GM12878 (cell line): ENCODE measurements at regions of chr3 and their contacts with region 1.

Region 1: GRCh38 chr3:196251918-196252317 is 35.6 kb downstream of the SLC51A start:
- DNase-seq: no peak
- ATAC-seq: no peak
- H3K4me3 ChIP-seq: no peak overlapping the region
- H3K27ac ChIP-seq: no peak overlapping the region
- H3K4me1 ChIP-seq: no peaks in the 10 kb centered on the region
- H3K27me3 ChIP-seq: no peaks in the 10 kb centered on the region
- CTCF ChIP-seq: no peak
- EP300 ChIP-seq: no peak
- POLR2A ChIP-seq: no peak
- RAD21 ChIP-seq: no peak

Region 2: GRCh38 chr3:196280689-196281440 is 28.9 kb after region 1 on chr3:
- CTCF ChIA-PET with region 1: interaction called, 13 read pairs
- POLR2A ChIA-PET with region 1: interaction called, 3 read pairs
- RAD21 ChIA-PET with region 1: no interaction called
- SMC1A ChIA-PET with region 1: interaction called, 4 read pairs
- in situ Hi-C with region 1: no loop called
- intact Hi-C with region 1: no loop called
- DNase-seq: no peak
- ATAC-seq: peak; percentile 89
- H3K4me3 ChIP-seq: peak overlapping the region; percentile 55
- H3K27ac ChIP-seq: peak overlapping the region; percentile 71
- H3K4me1 ChIP-seq: peaks cover 29% of the 10 kb centered on the region
- H3K27me3 ChIP-seq: no peaks in the 10 kb centered on the region
- CTCF ChIP-seq: no peak
- EP300 ChIP-seq: no peak
- POLR2A ChIP-seq: no peak
- RAD21 ChIP-seq: no peak

Region 3: GRCh38 chr3:196317687-196318467 is 66.0 kb after region 1 on chr3 and contains the start of gene DYNLT2B:
- CTCF ChIA-PET with region 1: interaction called, 11 read pairs
- POLR2A ChIA-PET with region 1: no interaction called
- RAD21 ChIA-PET with region 1: no interaction called
- SMC1A ChIA-PET with region 1: interaction called, 3 read pairs
- in situ Hi-C with region 1: no loop called
- intact Hi-C with region 1: no loop called
- DNase-seq: peak; percentile 67
- ATAC-seq: peak; percentile 97
- H3K4me3 ChIP-seq: peak within 1 kb of the TSS; percentile 97
- H3K27ac ChIP-seq: peak within 1 kb of the TSS; percentile 83
- H3K4me1 ChIP-seq: no peaks in the 10 kb centered on the region
- H3K27me3 ChIP-seq: no peaks in the 10 kb centered on the region
- CTCF ChIP-seq: peak in 1 of 3 experiments; percentile 45; a peak in 2 of 6 replicates
- EP300 ChIP-seq: no peak
- POLR2A ChIP-seq: peak; percentile 88
- RAD21 ChIP-seq: no peak
- polyA plus RNA-seq, gene DYNLT2B: 24.2 to 39.6 TPM

Region 4: GRCh38 chr3:196360586-196360985 is 108.7 kb after region 1 on chr3:
- CTCF ChIA-PET with region 1: interaction called, 4 read pairs
- POLR2A ChIA-PET with region 1: no interaction called
- RAD21 ChIA-PET with region 1: no interaction called
- SMC1A ChIA-PET with region 1: interaction called, 3 read pairs
- in situ Hi-C with region 1: no loop called
- intact Hi-C with region 1: loop called (anchors 10 kb)
- DNase-seq: no peak
- ATAC-seq: no peak
- H3K4me3 ChIP-seq: no peak overlapping the region
- H3K27ac ChIP-seq: no peak overlapping the region
- H3K4me1 ChIP-seq: no peaks in the 10 kb centered on the region
- H3K27me3 ChIP-seq: no peaks in the 10 kb centered on the region
- CTCF ChIP-seq: no peak
- EP300 ChIP-seq: no peak
- POLR2A ChIP-seq: no peak
- RAD21 ChIP-seq: no peak

Region 5: DNA sequence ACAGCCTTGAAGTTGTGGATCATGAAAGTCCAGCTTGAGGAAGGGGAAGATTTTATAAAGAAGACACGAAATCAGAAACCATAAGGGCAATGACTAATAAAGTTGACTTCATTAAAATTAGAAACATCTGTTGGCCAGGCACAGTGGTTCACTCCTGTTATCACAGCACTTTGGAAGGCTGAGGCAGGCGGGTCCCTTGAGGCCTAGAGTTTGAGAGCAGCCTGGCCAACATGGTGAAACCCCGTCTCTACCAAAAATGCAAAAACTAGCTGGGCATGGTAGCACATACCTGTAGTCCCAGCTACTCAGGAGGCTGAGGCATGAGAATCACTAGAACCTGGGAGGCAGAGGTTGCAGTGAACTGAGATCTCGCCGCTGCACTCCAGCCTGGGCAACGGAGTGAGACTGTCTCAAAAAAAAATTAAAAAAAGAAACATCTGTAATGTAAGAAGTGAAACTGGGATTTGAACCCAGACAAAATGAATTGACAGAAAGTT is 188.2 kb after region 1 on chr3:
- CTCF ChIA-PET with region 1: interaction called, 7 read pairs
- POLR2A ChIA-PET with region 1: no interaction called
- RAD21 ChIA-PET with region 1: interaction called, 4 read pairs
- SMC1A ChIA-PET with region 1: interaction called, 6 read pairs
- in situ Hi-C with region 1: no loop called
- intact Hi-C with region 1: loop called (anchors 5 kb)
- DNase-seq: peak; percentile 67
- ATAC-seq: peak; percentile 79
- H3K4me3 ChIP-seq: no peak overlapping the region
- H3K27ac ChIP-seq: peak overlapping the region; percentile 95
- H3K4me1 ChIP-seq: peaks cover 34% of the 10 kb centered on the region
- H3K27me3 ChIP-seq: no peaks in the 10 kb centered on the region
- CTCF ChIP-seq: no peak
- EP300 ChIP-seq: no peak
- POLR2A ChIP-seq: no peak
- RAD21 ChIP-seq: no peak

Region 6: GRCh38 chr3:196518966-196519717 is 267.2 kb after region 1 on chr3:
- CTCF ChIA-PET with region 1: interaction called, 48 read pairs
- POLR2A ChIA-PET with region 1: interaction called, 3 read pairs
- RAD21 ChIA-PET with region 1: interaction called, 17 read pairs
- SMC1A ChIA-PET with region 1: interaction called, 21 read pairs
- in situ Hi-C with region 1: loop called (anchors 5 kb)
- intact Hi-C with region 1: loop called (anchors 2 kb)
- DNase-seq: no peak
- ATAC-seq: peak; percentile 90
- H3K4me3 ChIP-seq: no peak overlapping the region
- H3K27ac ChIP-seq: no peak overlapping the region
- H3K4me1 ChIP-seq: no peaks in the 10 kb centered on the region
- H3K27me3 ChIP-seq: no peaks in the 10 kb centered on the region
- CTCF ChIP-seq: peak; percentile 47 to 50 (median 49)
- EP300 ChIP-seq: no peak
- POLR2A ChIP-seq: no peak
- RAD21 ChIP-seq: peak; percentile 74

Region 7: GRCh38 chr3:196528639-196529233 is 276.8 kb after region 1 on chr3:
- CTCF ChIA-PET with region 1: interaction called, 48 read pairs
- POLR2A ChIA-PET with region 1: no interaction called
- RAD21 ChIA-PET with region 1: interaction called, 17 read pairs
- SMC1A ChIA-PET with region 1: interaction called, 21 read pairs
- in situ Hi-C with region 1: loop called (anchors 5 kb)
- intact Hi-C with region 1: loop called (anchors 2 kb)
- DNase-seq: no peak
- ATAC-seq: peak; percentile 96
- H3K4me3 ChIP-seq: peak overlapping the region; percentile 69
- H3K27ac ChIP-seq: peak overlapping the region; percentile 96
- H3K4me1 ChIP-seq: peaks cover 13% of the 10 kb centered on the region
- H3K27me3 ChIP-seq: no peaks in the 10 kb centered on the region
- CTCF ChIP-seq: peak; percentile 49 to 84 (median 53); a peak in 5 of 6 replicates
- EP300 ChIP-seq: no peak
- POLR2A ChIP-seq: peak; percentile 94
- RAD21 ChIP-seq: peak; percentile 48

Region 8: GRCh38 chr3:196645917-196646665 is 394.2 kb after region 1 on chr3:
- CTCF ChIA-PET with region 1: no interaction called
- POLR2A ChIA-PET with region 1: no interaction called
- RAD21 ChIA-PET with region 1: no interaction called
- SMC1A ChIA-PET with region 1: no interaction called
- in situ Hi-C with region 1: no loop called
- intact Hi-C with region 1: no loop called
- DNase-seq: no peak
- ATAC-seq: no peak
- H3K4me3 ChIP-seq: no peak overlapping the region
- H3K27ac ChIP-seq: no peak overlapping the region
- H3K4me1 ChIP-seq: peaks cover 44% of the 10 kb centered on the region
- H3K27me3 ChIP-seq: no peaks in the 10 kb centered on the region
- CTCF ChIP-seq: no peak
- EP300 ChIP-seq: no peak
- POLR2A ChIP-seq: peak; percentile 51
- RAD21 ChIP-seq: no peak